ENCODE measurements at regions of chr17 and their contacts with region 1.

Region 1: DNA sequence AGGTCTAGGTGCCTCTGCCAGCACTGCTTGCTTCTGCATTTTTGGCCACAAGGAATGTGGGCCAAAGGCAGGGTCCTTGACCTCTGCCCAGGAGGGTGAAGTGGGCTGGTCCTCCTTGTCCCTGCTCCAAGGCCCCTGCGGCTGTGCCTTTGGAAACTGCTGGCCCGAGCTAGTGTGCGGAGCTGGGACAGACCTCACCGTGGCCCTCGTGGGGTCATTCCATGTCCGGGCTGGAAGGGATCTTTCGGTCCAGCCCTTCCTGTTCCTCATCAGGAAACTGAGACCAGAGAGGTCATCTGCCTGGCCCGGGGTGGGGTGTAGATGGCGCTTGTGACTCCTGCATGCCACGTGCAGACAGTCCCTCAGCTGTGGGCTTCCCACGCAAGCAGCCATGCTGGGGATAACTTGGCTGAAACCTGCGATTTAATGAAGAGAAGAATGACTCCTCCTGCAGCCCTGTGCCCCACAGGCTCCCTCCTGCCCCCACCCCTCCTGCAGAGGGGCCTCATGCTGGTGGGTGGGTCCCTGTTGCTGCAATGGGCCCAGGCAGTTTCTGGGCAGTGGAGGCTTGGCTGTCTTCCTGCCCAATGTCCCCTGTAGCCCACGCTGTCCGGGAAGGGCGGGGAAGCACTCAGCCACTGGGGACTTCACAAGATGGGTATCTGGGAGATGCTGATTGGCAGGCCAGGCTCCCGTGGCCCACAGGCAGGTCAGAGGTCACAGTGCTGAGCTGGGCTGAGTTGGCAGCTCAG is 245.2 kb downstream of the SEC14L1 start:
- DNase-seq: no peak
- ATAC-seq: peak; percentile 5

Region 2: GRCh38 chr17:77349976-77350830 is 35.7 kb before region 1 on chr17:
- intact Hi-C with region 1: loop called (anchors 2 kb)
- DNase-seq: peak; percentile 45
- ATAC-seq: no peak

Region 3: GRCh38 chr17:77372444-77373298 is 13.3 kb before region 1 on chr17:
- intact Hi-C with region 1: loop called (anchors 1 kb)
- DNase-seq: peak; percentile 95
- ATAC-seq: peak; percentile 68

Region 4: GRCh38 chr17:77420804-77421629 is 35.1 kb after region 1 on chr17:
- intact Hi-C with region 1: loop called (anchors 5 kb)
- DNase-seq: peak; percentile 43
- ATAC-seq: no peak

Region 5: GRCh38 chr17:77441130-77441920 is 55.4 kb after region 1 on chr17:
- intact Hi-C with region 1: no loop called
- DNase-seq: peak; percentile 61
- ATAC-seq: no peak